ENCODE measurements at regions of chr17 and their contacts with region 1.

Region 1: GRCh38 chr17:17237026-17237799 is at the start of gene FLCN:
- DNase-seq: peak; percentile 91 to 95
- ATAC-seq: peak; percentile 87 to 95 (median 91)
- H3K4me3 ChIP-seq: peak within 1 kb of the TSS; percentile 99
- H3K4me3 Mint-ChIP-seq: peak within 1 kb of the TSS; percentile 97
- H3K27ac ChIP-seq: peak within 1 kb of the TSS; percentile 92
- H3K27ac Mint-ChIP-seq: peak within 1 kb of the TSS; percentile 99
- H3K4me1 ChIP-seq: peaks cover 26% of the 10 kb centered on the region
- H3K4me1 Mint-ChIP-seq: peaks cover 30 to 44% of the 10 kb centered on the region in 2 donors
- H3K27me3 ChIP-seq: no peaks in the 10 kb centered on the region
- H3K27me3 Mint-ChIP-seq: no peaks in the 10 kb centered on the region
- CTCF ChIP-seq: no peak
- total RNA-seq, gene FLCN: 26.7 to 43.6 (median 33.8) TPM

Region 2: GRCh38 chr17:17041571-17042380 is 195.4 kb before region 1 on chr17:
- intact Hi-C with region 1: loop called (anchors 5 kb)
- DNase-seq: peak; percentile 95 to 97
- ATAC-seq: peak; percentile 95 to 99 (median 97)
- H3K4me3 ChIP-seq: peak overlapping the region; percentile 30
- H3K4me3 Mint-ChIP-seq: peak overlapping the region; percentile 81
- H3K27ac ChIP-seq: no peak overlapping the region
- H3K27ac Mint-ChIP-seq: peak overlapping the region in 1 of 2 donors; percentile 73
- H3K4me1 ChIP-seq: peaks cover 36% of the 10 kb centered on the region
- H3K4me1 Mint-ChIP-seq: peaks cover 46 to 47% of the 10 kb centered on the region in 2 donors
- H3K27me3 ChIP-seq: no peaks in the 10 kb centered on the region
- H3K27me3 Mint-ChIP-seq: no peaks in the 10 kb centered on the region
- CTCF ChIP-seq: no peak

Region 3: GRCh38 chr17:17206124-17206912 is 30.9 kb before region 1 on chr17 and contains the start of gene PLD6:
- intact Hi-C with region 1: loop called (anchors 1 kb)
- DNase-seq: peak; percentile 75 to 96
- ATAC-seq: peak; percentile 67 to 84 (median 75)
- H3K4me3 ChIP-seq: peak within 1 kb of the TSS; percentile 53
- H3K4me3 Mint-ChIP-seq: peak within 1 kb of the TSS; percentile 80
- H3K27ac ChIP-seq: peak within 1 kb of the TSS; percentile 56
- H3K27ac Mint-ChIP-seq: peak within 1 kb of the TSS; percentile 61 to 87
- H3K4me1 ChIP-seq: peaks cover 43% of the 10 kb centered on the region
- H3K4me1 Mint-ChIP-seq: peaks cover 22 to 41% of the 10 kb centered on the region in 2 donors
- H3K27me3 ChIP-seq: no peaks in the 10 kb centered on the region
- H3K27me3 Mint-ChIP-seq: no peaks in the 10 kb centered on the region
- CTCF ChIP-seq: no peak
- total RNA-seq, gene PLD6: 0.45 to 1.7 (median 0.84) TPM

Region 4: GRCh38 chr17:17280613-17281549 is 43.7 kb after region 1 on chr17 and contains the start of gene COPS3:
- intact Hi-C with region 1: loop called (anchors 2 kb)
- DNase-seq: peak; percentile 96 to 99
- ATAC-seq: peak; percentile 87 to 96 (median 91)
- H3K4me3 ChIP-seq: peak within 1 kb of the TSS; percentile 84
- H3K4me3 Mint-ChIP-seq: peak within 1 kb of the TSS; percentile 93
- H3K27ac ChIP-seq: peak within 1 kb of the TSS; percentile 88
- H3K27ac Mint-ChIP-seq: peak within 1 kb of the TSS; percentile 91 to 94
- H3K4me1 ChIP-seq: peaks cover 25% of the 10 kb centered on the region
- H3K4me1 Mint-ChIP-seq: peaks cover 23 to 37% of the 10 kb centered on the region in 2 donors
- H3K27me3 ChIP-seq: no peaks in the 10 kb centered on the region
- H3K27me3 Mint-ChIP-seq: no peaks in the 10 kb centered on the region
- CTCF ChIP-seq: no peak
- total RNA-seq, gene COPS3: 101 to 115 (median 102) TPM

Region 5: GRCh38 chr17:17303010-17303846 is 66.0 kb after region 1 on chr17 and contains the start of gene NT5M:
- intact Hi-C with region 1: loop called (anchors 2 kb)
- DNase-seq: peak; percentile 74 to 80
- ATAC-seq: peak; percentile 50 to 75 (median 66)
- H3K4me3 ChIP-seq: peak within 1 kb of the TSS; percentile 45
- H3K4me3 Mint-ChIP-seq: peak within 1 kb of the TSS; percentile 88
- H3K27ac ChIP-seq: peak within 1 kb of the TSS; percentile 65
- H3K27ac Mint-ChIP-seq: peak within 1 kb of the TSS; percentile 79 to 93
- H3K4me1 ChIP-seq: peaks cover 41% of the 10 kb centered on the region
- H3K4me1 Mint-ChIP-seq: peaks cover 31 to 36% of the 10 kb centered on the region in 2 donors
- H3K27me3 ChIP-seq: no peaks in the 10 kb centered on the region
- H3K27me3 Mint-ChIP-seq: peaks cover 5% of the 10 kb centered on the region in 2 donors
- CTCF ChIP-seq: no peak
- total RNA-seq, gene NT5M: 3.5 to 4.4 (median 4.1) TPM